Dorsolateral prefrontal cortex (tissue), 120 donors: ENCODE measurements at regions of chr10 and their contacts with region 1.

Region 1: GRCh38 chr10:116974473-116975005 is 30.4 kb downstream of the SHTN1 start:
- DNase-seq: no peak
- H3K4me3 ChIP-seq: peak overlapping the region in 3 of 59 donors; percentile 5 to 23 (median 18)
- H3K27ac ChIP-seq: peak overlapping the region in 58 of 59 donors; percentile 86 to 99 (median 96)
- H3K27me3 ChIP-seq: no peaks in the 10 kb centered on the region
- CTCF ChIP-seq: no peak

Region 2: GRCh38 chr10:116857156-116857555 is 117.4 kb before region 1 on chr10:
- intact Hi-C with region 1: no loop called
- DNase-seq: no peak
- H3K4me3 ChIP-seq: no peak overlapping the region
- H3K27ac ChIP-seq: no peak overlapping the region
- H3K27me3 ChIP-seq: no peaks in the 10 kb centered on the region
- CTCF ChIP-seq: no peak

Region 3: GRCh38 chr10:116961406-116962251 is 12.9 kb before region 1 on chr10:
- intact Hi-C with region 1: loop called in 1 of 2 experiments (anchors 1 kb)
- DNase-seq: peak in 2 of 10 donors; percentile 66 to 80
- H3K4me3 ChIP-seq: peak overlapping the region in 3 of 59 donors; percentile 4 to 24 (median 10)
- H3K27ac ChIP-seq: peak overlapping the region; percentile 61 to 99 (median 92)
- H3K27me3 ChIP-seq: no peaks in the 10 kb centered on the region
- CTCF ChIP-seq: no peak

Region 4: DNA sequence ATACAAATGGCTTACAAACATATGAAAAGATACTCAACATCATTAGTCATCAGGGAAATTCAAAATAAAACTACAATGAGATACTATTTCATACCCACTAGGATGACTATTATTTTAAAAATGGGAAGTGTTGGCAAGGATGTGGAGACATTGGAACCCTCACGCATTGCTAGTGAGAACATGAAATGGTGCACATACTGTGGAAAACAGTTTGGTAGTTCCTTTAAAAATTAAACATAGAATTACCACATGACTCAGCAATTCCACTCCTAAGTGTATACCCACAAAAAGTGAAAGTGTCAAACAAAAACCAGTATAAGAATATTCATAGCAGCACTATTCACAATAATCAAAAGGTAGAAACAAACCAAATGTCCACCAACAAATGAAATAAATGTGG is 78.9 kb after region 1 on chr10:
- intact Hi-C with region 1: no loop called
- DNase-seq: no peak
- H3K4me3 ChIP-seq: no peak overlapping the region
- H3K27ac ChIP-seq: no peak overlapping the region
- H3K27me3 ChIP-seq: no peaks in the 10 kb centered on the region
- CTCF ChIP-seq: no peak